CD4-positive, alpha-beta T cell (primary cell): ENCODE measurements at regions of chr9 and their contacts with region 1.

Region 1: GRCh38 chr9:2132484-2133082 is 117.4 kb downstream of the SMARCA2 start:
- DNase-seq: peak in 3 of 14 experiments; percentile 26 to 34 (median 27)
- ATAC-seq: no peak
- H3K4me3 ChIP-seq: no peak overlapping the region
- H3K4me3 Mint-ChIP-seq: no peak overlapping the region
- H3K27ac ChIP-seq: no peak overlapping the region
- H3K27ac Mint-ChIP-seq: no peak overlapping the region
- H3K4me1 ChIP-seq: no peaks in the 10 kb centered on the region
- H3K4me1 Mint-ChIP-seq: peaks cover 58% of the 10 kb centered on the region
- H3K27me3 ChIP-seq: no peaks in the 10 kb centered on the region
- H3K27me3 Mint-ChIP-seq: no peaks in the 10 kb centered on the region
- CTCF ChIP-seq: peak; percentile 75

Region 2: GRCh38 chr9:2158111-2158610 is 25.6 kb after region 1 on chr9:
- CTCF ChIA-PET with region 1: interaction called, 3 read pairs
- POLR2A ChIA-PET with region 1: interaction called, 3 read pairs
- intact Hi-C with region 1: loop called in 1 of 2 experiments (anchors 2 kb)
- DNase-seq: peak in 12 of 14 experiments; percentile 6 to 80 (median 21)
- ATAC-seq: peak; percentile 85
- H3K4me3 ChIP-seq: peak overlapping the region; percentile 60
- H3K4me3 Mint-ChIP-seq: peak overlapping the region; percentile 86
- H3K27ac ChIP-seq: no peak overlapping the region
- H3K27ac Mint-ChIP-seq: peak overlapping the region; percentile 73
- H3K4me1 ChIP-seq: peaks cover 21% of the 10 kb centered on the region
- H3K4me1 Mint-ChIP-seq: peaks cover 72% of the 10 kb centered on the region
- H3K27me3 ChIP-seq: no peaks in the 10 kb centered on the region
- H3K27me3 Mint-ChIP-seq: no peaks in the 10 kb centered on the region
- CTCF ChIP-seq: no peak

Region 3: DNA sequence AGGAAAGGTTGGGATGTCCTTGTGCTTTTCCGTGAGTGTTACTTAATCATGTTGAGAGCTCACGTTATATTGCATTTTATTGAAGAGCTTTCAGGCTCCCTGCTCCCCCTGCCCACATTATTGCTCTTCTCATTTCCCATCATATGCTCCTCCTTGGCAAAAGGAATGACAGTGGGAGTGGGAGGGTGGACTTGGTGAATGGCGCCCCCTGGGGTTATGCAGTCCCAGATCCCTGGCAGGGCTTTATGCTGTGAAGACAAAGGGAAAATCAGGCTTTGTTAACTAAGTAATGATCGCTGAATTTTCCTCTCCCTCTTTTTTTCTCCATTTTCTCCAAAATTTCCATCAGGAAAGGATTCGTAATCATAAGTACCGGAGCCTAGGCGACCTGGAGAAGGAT is 49.2 kb after region 1 on chr9:
- CTCF ChIA-PET with region 1: interaction called, 4 read pairs
- POLR2A ChIA-PET with region 1: no interaction called
- intact Hi-C with region 1: loop called (anchors 1 to 5 kb)
- DNase-seq: peak in 5 of 14 experiments; percentile 12 to 37 (median 32)
- ATAC-seq: no peak
- H3K4me3 ChIP-seq: no peak overlapping the region
- H3K4me3 Mint-ChIP-seq: no peak overlapping the region
- H3K27ac ChIP-seq: no peak overlapping the region
- H3K27ac Mint-ChIP-seq: no peak overlapping the region
- H3K4me1 ChIP-seq: no peaks in the 10 kb centered on the region
- H3K4me1 Mint-ChIP-seq: no peaks in the 10 kb centered on the region
- H3K27me3 ChIP-seq: no peaks in the 10 kb centered on the region
- H3K27me3 Mint-ChIP-seq: no peaks in the 10 kb centered on the region
- CTCF ChIP-seq: peak; percentile 23

Region 4: GRCh38 chr9:2837915-2838314 is 705.3 kb after region 1 on chr9:
- CTCF ChIA-PET with region 1: no interaction called
- POLR2A ChIA-PET with region 1: no interaction called
- intact Hi-C with region 1: loop called (anchors 5 to 10 kb)
- DNase-seq: peak in 1 of 14 experiments; percentile 23
- ATAC-seq: no peak
- H3K4me3 ChIP-seq: no peak overlapping the region
- H3K4me3 Mint-ChIP-seq: no peak overlapping the region
- H3K27ac ChIP-seq: no peak overlapping the region
- H3K27ac Mint-ChIP-seq: no peak overlapping the region
- H3K4me1 ChIP-seq: peaks cover 8% of the 10 kb centered on the region
- H3K4me1 Mint-ChIP-seq: peaks cover 39% of the 10 kb centered on the region
- H3K27me3 ChIP-seq: no peaks in the 10 kb centered on the region
- H3K27me3 Mint-ChIP-seq: no peaks in the 10 kb centered on the region
- CTCF ChIP-seq: peak; percentile 16